Colonic mucosa (tissue), 4 donors: ENCODE measurements at regions of chr12 and their contacts with region 1.

Region 1: GRCh38 chr12:27244684-27245488 is 800 bp downstream of the STK38L start:
- DNase-seq: no peak
- H3K4me3 ChIP-seq: peak overlapping the region; percentile 65
- H3K27ac ChIP-seq: peak overlapping the region; percentile 87
- H3K4me1 ChIP-seq: no peaks in the 10 kb centered on the region
- H3K27me3 ChIP-seq: no peaks in the 10 kb centered on the region
- CTCF ChIP-seq: no peak

Region 2: DNA sequence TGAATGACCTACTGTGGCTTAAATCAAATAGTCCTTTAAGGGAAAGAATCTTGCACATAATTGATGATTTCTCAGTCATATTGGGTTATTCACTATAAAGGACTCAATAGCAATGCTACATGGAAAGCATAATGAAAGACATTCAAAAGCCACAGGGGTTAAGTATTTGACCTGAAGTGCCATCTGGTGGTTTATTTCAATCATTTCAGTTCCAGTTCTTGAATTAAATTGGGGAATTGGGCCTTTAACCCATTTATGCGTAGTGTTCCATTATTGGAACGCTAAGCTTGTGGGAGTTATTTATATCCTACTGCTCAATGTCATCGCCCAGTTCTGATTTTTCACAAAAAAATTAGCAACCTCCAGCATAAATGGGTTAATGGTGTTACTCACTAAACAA is 121.2 kb before region 1 on chr12:
- intact Hi-C with region 1: no loop called
- DNase-seq: no peak
- H3K4me3 ChIP-seq: no peak overlapping the region
- H3K27ac ChIP-seq: no peak overlapping the region
- H3K4me1 ChIP-seq: no peaks in the 10 kb centered on the region
- H3K27me3 ChIP-seq: no peaks in the 10 kb centered on the region
- CTCF ChIP-seq: peak; percentile 18

Region 3: DNA sequence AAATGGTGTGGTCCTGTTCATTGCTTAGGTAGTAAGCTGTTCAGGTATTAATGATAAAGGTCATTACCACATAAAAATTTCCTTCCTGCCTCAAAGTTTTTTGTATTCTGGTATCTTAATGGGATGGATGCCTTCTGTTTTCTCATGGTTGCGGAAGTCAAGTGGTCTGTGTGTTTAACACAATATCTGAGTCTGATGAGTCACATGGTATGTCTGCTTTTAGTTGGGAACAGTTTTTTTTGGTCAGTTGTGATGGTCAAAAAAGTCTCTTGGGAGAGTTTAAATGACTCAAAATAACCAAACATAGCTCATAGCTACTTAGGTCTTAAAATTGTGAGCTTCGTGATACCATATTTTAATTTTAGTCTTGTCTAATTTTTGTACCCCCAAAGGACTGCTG is 39.9 kb after region 1 on chr12:
- intact Hi-C with region 1: loop called (anchors 5 kb)
- DNase-seq: no peak
- H3K4me3 ChIP-seq: no peak overlapping the region
- H3K27ac ChIP-seq: no peak overlapping the region
- H3K4me1 ChIP-seq: peaks cover 10% of the 10 kb centered on the region
- H3K27me3 ChIP-seq: no peaks in the 10 kb centered on the region
- CTCF ChIP-seq: no peak